ENCODE measurements at regions of chr19 and their contacts with region 1.

Region 1: GRCh38 chr19:58362272-58362994 is at the start of gene ZNF497:
- DNase-seq: peak; percentile 99
- H3K4me3 Mint-ChIP-seq: peak within 1 kb of the TSS; percentile 95
- H3K27ac Mint-ChIP-seq: peak within 1 kb of the TSS; percentile 97
- H3K4me1 Mint-ChIP-seq: peaks cover 9% of the 10 kb centered on the region
- H3K27me3 Mint-ChIP-seq: no peaks in the 10 kb centered on the region
- total RNA-seq, gene ZNF497: 0.79 and 1.1 TPM in 2 replicates

Region 2: GRCh38 chr19:58346961-58347931 is 15.2 kb before region 1 on chr19:
- intact Hi-C with region 1: loop called (anchors 1 kb)
- DNase-seq: peak; percentile 91
- H3K4me3 Mint-ChIP-seq: peak overlapping the region; percentile 98
- H3K27ac Mint-ChIP-seq: peak overlapping the region; percentile 86
- H3K4me1 Mint-ChIP-seq: peaks cover 16% of the 10 kb centered on the region
- H3K27me3 Mint-ChIP-seq: no peaks in the 10 kb centered on the region

Region 3: GRCh38 chr19:58400916-58401839 is 38.7 kb after region 1 on chr19:
- intact Hi-C with region 1: loop called (anchors 1 kb)
- DNase-seq: peak; percentile 100
- H3K4me3 Mint-ChIP-seq: peak overlapping the region; percentile 91
- H3K27ac Mint-ChIP-seq: peak overlapping the region; percentile 90
- H3K4me1 Mint-ChIP-seq: peaks cover 10% of the 10 kb centered on the region
- H3K27me3 Mint-ChIP-seq: peaks cover 7% of the 10 kb centered on the region